ENCODE measurements at regions of chr3 and their contacts with region 1.

Region 1: DNA sequence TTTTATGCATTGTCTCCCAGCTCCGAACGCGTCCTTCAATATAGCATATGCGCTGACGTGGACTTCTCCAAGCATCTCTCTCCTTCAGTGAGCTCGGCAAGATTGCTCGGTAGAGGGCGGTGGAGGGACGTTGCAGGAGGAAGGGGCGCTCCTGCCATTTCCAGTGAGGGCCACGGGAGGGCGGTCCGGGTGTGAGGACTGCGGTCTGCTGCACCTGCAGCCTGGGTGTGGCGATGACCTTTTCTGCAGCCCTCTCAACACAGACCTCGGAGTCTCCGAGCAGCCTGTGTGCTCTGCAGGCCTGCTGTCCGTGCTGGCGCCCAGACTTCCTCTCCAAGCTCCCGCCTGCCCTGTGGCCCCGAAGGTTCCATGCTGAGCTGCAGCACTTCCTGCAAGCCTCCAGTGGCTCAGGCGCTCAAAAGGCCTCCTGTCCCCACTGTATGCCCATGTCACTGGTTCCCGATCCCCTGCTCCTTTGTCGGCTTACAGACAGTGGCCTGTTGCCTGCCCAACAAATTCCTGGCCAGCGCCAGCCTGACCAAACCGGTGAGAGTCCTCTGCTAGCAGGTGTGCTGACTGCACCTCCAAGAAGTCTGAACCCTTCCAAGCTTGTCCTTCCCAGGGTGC is 8.9 kb upstream of the RTP3 start:
- DNase-seq: peak; percentile 96
- H3K4me3 Mint-ChIP-seq: peak overlapping the region; percentile 21
- H3K27ac Mint-ChIP-seq: no peak overlapping the region
- H3K4me1 Mint-ChIP-seq: peaks cover 11% of the 10 kb centered on the region
- H3K27me3 Mint-ChIP-seq: no peaks in the 10 kb centered on the region

Region 2: DNA sequence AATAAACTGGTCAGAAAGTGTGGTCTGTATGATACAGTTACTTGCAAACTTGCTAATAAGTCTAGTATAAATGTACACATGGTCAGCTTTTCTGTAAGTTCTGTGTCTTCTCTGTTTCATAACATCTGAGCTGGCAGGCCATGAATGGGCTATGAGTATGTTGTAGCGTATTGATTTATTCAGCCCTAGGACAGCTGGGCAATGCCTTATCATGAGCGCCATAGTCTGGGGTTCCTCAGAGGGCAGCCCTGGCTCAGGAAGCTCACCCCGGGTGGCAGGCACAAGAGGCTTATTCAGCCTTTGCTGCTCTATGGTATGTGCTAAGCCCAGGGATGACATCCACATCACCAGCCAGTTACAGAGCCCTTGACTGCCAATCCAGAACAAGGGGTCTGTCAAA is 185.6 kb before region 1 on chr3:
- CTCF ChIA-PET with region 1: no interaction called
- POLR2A ChIA-PET with region 1: no interaction called
- intact Hi-C with region 1: no loop called
- DNase-seq: no peak
- H3K4me3 Mint-ChIP-seq: no peak overlapping the region
- H3K27ac Mint-ChIP-seq: no peak overlapping the region
- H3K4me1 Mint-ChIP-seq: peaks cover 45% of the 10 kb centered on the region
- H3K27me3 Mint-ChIP-seq: peaks cover 5% of the 10 kb centered on the region

Region 3: GRCh38 chr3:46378426-46378942 is 110.4 kb before region 1 on chr3:
- CTCF ChIA-PET with region 1: interaction called, 10 read pairs
- POLR2A ChIA-PET with region 1: no interaction called
- intact Hi-C with region 1: no loop called
- DNase-seq: peak; percentile 79
- H3K4me3 Mint-ChIP-seq: no peak overlapping the region
- H3K27ac Mint-ChIP-seq: no peak overlapping the region
- H3K4me1 Mint-ChIP-seq: peaks cover 36% of the 10 kb centered on the region
- H3K27me3 Mint-ChIP-seq: peaks cover 13% of the 10 kb centered on the region

Region 4: GRCh38 chr3:46469680-46470357 is 19.0 kb before region 1 on chr3:
- CTCF ChIA-PET with region 1: interaction called, 14 read pairs
- POLR2A ChIA-PET with region 1: no interaction called
- intact Hi-C with region 1: no loop called
- DNase-seq: no peak
- H3K4me3 Mint-ChIP-seq: no peak overlapping the region
- H3K27ac Mint-ChIP-seq: no peak overlapping the region
- H3K4me1 Mint-ChIP-seq: no peaks in the 10 kb centered on the region
- H3K27me3 Mint-ChIP-seq: peaks cover 23% of the 10 kb centered on the region

Region 5: GRCh38 chr3:46508850-46509591 is 20.2 kb after region 1 on chr3:
- CTCF ChIA-PET with region 1: interaction called, 18 read pairs
- POLR2A ChIA-PET with region 1: no interaction called
- intact Hi-C with region 1: no loop called
- DNase-seq: no peak
- H3K4me3 Mint-ChIP-seq: no peak overlapping the region
- H3K27ac Mint-ChIP-seq: no peak overlapping the region
- H3K4me1 Mint-ChIP-seq: peaks cover 9% of the 10 kb centered on the region
- H3K27me3 Mint-ChIP-seq: peaks cover 5% of the 10 kb centered on the region

Region 6: GRCh38 chr3:46538803-46539442 is 50.1 kb after region 1 on chr3:
- CTCF ChIA-PET with region 1: interaction called, 43 read pairs
- POLR2A ChIA-PET with region 1: no interaction called
- intact Hi-C with region 1: loop called (anchors 5 kb)
- DNase-seq: peak; percentile 87
- H3K4me3 Mint-ChIP-seq: peak overlapping the region; percentile 63
- H3K27ac Mint-ChIP-seq: peak overlapping the region; percentile 79
- H3K4me1 Mint-ChIP-seq: peaks cover 57% of the 10 kb centered on the region
- H3K27me3 Mint-ChIP-seq: no peaks in the 10 kb centered on the region

Region 7: GRCh38 chr3:46558184-46559043 is 69.6 kb after region 1 on chr3:
- CTCF ChIA-PET with region 1: interaction called, 168 read pairs
- POLR2A ChIA-PET with region 1: no interaction called
- intact Hi-C with region 1: loop called (anchors 1 kb)
- DNase-seq: peak; percentile 78
- H3K4me3 Mint-ChIP-seq: peak overlapping the region; percentile 71
- H3K27ac Mint-ChIP-seq: no peak overlapping the region
- H3K4me1 Mint-ChIP-seq: peaks cover 11% of the 10 kb centered on the region
- H3K27me3 Mint-ChIP-seq: peaks cover 1% of the 10 kb centered on the region

Region 8: GRCh38 chr3:46629551-46630517 is 141.0 kb after region 1 on chr3:
- CTCF ChIA-PET with region 1: interaction called, 250 read pairs
- POLR2A ChIA-PET with region 1: interaction called, 4 read pairs
- intact Hi-C with region 1: loop called (anchors 1 kb)
- DNase-seq: peak; percentile 83
- H3K4me3 Mint-ChIP-seq: peak overlapping the region; percentile 40
- H3K27ac Mint-ChIP-seq: peak overlapping the region; percentile 31
- H3K4me1 Mint-ChIP-seq: peaks cover 18% of the 10 kb centered on the region
- H3K27me3 Mint-ChIP-seq: no peaks in the 10 kb centered on the region